BJ (cell line): ENCODE measurements at regions of chrX and their contacts with region 1.

Region 1: GRCh38 chrX:69128576-69128975 is 36.7 kb downstream of the PJA1 start:
- DNase-seq: no peak
- H3K4me3 ChIP-seq: peak overlapping the region; percentile 3; the same call in 1 of the 2 replicates
- H3K27me3 ChIP-seq: no peaks in the 10 kb centered on the region
- CTCF ChIP-seq: no peak

Region 2: GRCh38 chrX:69109683-69110082 is 18.9 kb before region 1 on chrX:
- CTCF ChIA-PET with region 1: no interaction called
- POLR2A ChIA-PET with region 1: interaction called, 10 read pairs
- DNase-seq: peak; percentile 67
- H3K4me3 ChIP-seq: no peak overlapping the region
- H3K27me3 ChIP-seq: no peaks in the 10 kb centered on the region
- CTCF ChIP-seq: no peak